GM12878 (cell line): ENCODE measurements at regions of chr5 and their contacts with region 1.

Region 1: GRCh38 chr5:138095100-138095907 is 11.5 kb downstream of the WNT8A start:
- DNase-seq: no peak
- ATAC-seq: no peak
- H3K4me3 ChIP-seq: no peak overlapping the region
- H3K27ac ChIP-seq: no peak overlapping the region
- H3K4me1 ChIP-seq: no peaks in the 10 kb centered on the region
- H3K27me3 ChIP-seq: no peaks in the 10 kb centered on the region; a peak in 1 of 4 replicates
- CTCF ChIP-seq: no peak
- EP300 ChIP-seq: no peak
- POLR2A ChIP-seq: no peak
- RAD21 ChIP-seq: no peak

Region 2: GRCh38 chr5:138128334-138128733 is 33.0 kb after region 1 on chr5:
- CTCF ChIA-PET with region 1: interaction called, 12 read pairs
- POLR2A ChIA-PET with region 1: interaction called, 8 read pairs
- RAD21 ChIA-PET with region 1: interaction called, 3 read pairs
- SMC1A ChIA-PET with region 1: interaction called, 3 read pairs
- in situ Hi-C with region 1: no loop called
- intact Hi-C with region 1: no loop called
- DNase-seq: no peak
- ATAC-seq: no peak
- H3K4me3 ChIP-seq: no peak overlapping the region
- H3K27ac ChIP-seq: no peak overlapping the region
- H3K4me1 ChIP-seq: no peaks in the 10 kb centered on the region
- H3K27me3 ChIP-seq: no peaks in the 10 kb centered on the region
- CTCF ChIP-seq: no peak
- EP300 ChIP-seq: no peak
- POLR2A ChIP-seq: no peak
- RAD21 ChIP-seq: no peak